ENCODE measurements at regions of chr2 and their contacts with region 1.

Region 1: GRCh38 chr2:11129598-11130449 is 25.4 kb upstream of the SLC66A3 start:
- DNase-seq: peak; percentile 53 to 90 (median 81)
- ATAC-seq: peak; percentile 90
- H3K4me3 ChIP-seq: peak overlapping the region; percentile 42 to 49
- H3K4me3 Mint-ChIP-seq: peak overlapping the region; percentile 80
- H3K27ac ChIP-seq: peak overlapping the region in 1 of 2 experiments; percentile 61
- H3K27ac Mint-ChIP-seq: peak overlapping the region; percentile 88
- H3K4me1 ChIP-seq: peaks cover 23% of the 10 kb centered on the region
- H3K4me1 Mint-ChIP-seq: peaks cover 29% of the 10 kb centered on the region
- H3K27me3 ChIP-seq: no peaks in the 10 kb centered on the region
- H3K27me3 Mint-ChIP-seq: no peaks in the 10 kb centered on the region
- CTCF ChIP-seq: peak; percentile 36

Region 2: DNA sequence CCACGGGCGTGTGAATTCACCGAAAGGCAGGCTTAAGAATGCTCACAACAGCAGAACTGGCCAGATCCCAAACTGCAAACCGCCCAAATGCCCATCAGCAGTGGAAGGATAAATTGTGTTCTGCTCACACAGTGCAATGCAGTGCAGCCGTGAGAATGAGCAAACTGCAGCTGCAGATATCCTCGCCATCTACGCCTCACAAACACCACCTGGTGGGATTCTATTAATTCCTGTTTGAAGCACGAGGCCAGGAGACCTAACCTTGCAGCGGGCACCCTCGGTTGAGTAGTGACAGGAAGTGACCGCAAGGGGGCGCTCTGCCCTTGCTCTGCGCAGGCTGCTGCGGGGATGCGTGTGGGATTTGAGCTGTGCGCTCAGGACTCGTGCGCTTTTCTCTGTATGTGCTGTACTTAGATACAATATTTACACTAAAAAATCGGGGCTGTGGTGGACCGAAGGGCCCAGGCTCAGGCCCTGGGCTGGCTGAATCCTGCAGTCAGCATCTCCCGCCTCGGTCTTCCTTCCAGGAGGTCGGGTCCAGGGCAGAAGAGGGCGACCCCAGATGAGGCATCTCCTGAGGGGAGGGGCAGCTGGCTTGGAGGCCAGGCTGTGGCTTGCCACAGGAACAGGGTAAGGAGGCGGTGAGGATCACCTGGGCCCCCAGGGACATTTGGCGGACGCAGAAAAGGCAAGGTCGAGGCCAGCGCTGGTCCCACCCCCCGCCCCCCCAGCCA is 297.5 kb before region 1 on chr2:
- CTCF ChIA-PET with region 1: interaction called, 119 read pairs
- POLR2A ChIA-PET with region 1: interaction called, 3 read pairs
- intact Hi-C with region 1: loop called (anchors 1 kb)
- DNase-seq: peak; percentile 62 to 88 (median 81)
- ATAC-seq: peak; percentile 95
- H3K4me3 ChIP-seq: no peak overlapping the region
- H3K4me3 Mint-ChIP-seq: peak overlapping the region; percentile 15
- H3K27ac ChIP-seq: no peak overlapping the region
- H3K27ac Mint-ChIP-seq: no peak overlapping the region
- H3K4me1 ChIP-seq: peaks cover 5% of the 10 kb centered on the region
- H3K4me1 Mint-ChIP-seq: peaks cover 6% of the 10 kb centered on the region
- H3K27me3 ChIP-seq: peaks cover 4% of the 10 kb centered on the region in 2 experiments
- H3K27me3 Mint-ChIP-seq: peaks cover 23% of the 10 kb centered on the region
- CTCF ChIP-seq: peak; percentile 98

Region 3: GRCh38 chr2:11196246-11196645 is 66.4 kb after region 1 on chr2:
- CTCF ChIA-PET with region 1: interaction called, 3 read pairs
- POLR2A ChIA-PET with region 1: no interaction called
- intact Hi-C with region 1: loop called (anchors 5 to 10 kb)
- DNase-seq: no peak
- ATAC-seq: no peak
- H3K4me3 ChIP-seq: no peak overlapping the region
- H3K4me3 Mint-ChIP-seq: no peak overlapping the region
- H3K27ac ChIP-seq: no peak overlapping the region
- H3K27ac Mint-ChIP-seq: no peak overlapping the region
- H3K4me1 ChIP-seq: no peaks in the 10 kb centered on the region
- H3K4me1 Mint-ChIP-seq: no peaks in the 10 kb centered on the region
- H3K27me3 ChIP-seq: no peaks in the 10 kb centered on the region
- H3K27me3 Mint-ChIP-seq: no peaks in the 10 kb centered on the region
- CTCF ChIP-seq: no peak

Region 4: GRCh38 chr2:11411768-11412448 is 282.1 kb after region 1 on chr2:
- CTCF ChIA-PET with region 1: interaction called, 25 read pairs
- POLR2A ChIA-PET with region 1: interaction called, 3 read pairs
- intact Hi-C with region 1: no loop called
- DNase-seq: peak in 2 of 9 experiments; percentile 17 to 30
- ATAC-seq: no peak
- H3K4me3 ChIP-seq: no peak overlapping the region
- H3K4me3 Mint-ChIP-seq: no peak overlapping the region
- H3K27ac ChIP-seq: no peak overlapping the region
- H3K27ac Mint-ChIP-seq: no peak overlapping the region
- H3K4me1 ChIP-seq: no peaks in the 10 kb centered on the region
- H3K4me1 Mint-ChIP-seq: no peaks in the 10 kb centered on the region
- H3K27me3 ChIP-seq: peaks cover 3 to 4% of the 10 kb centered on the region in 2 experiments
- H3K27me3 Mint-ChIP-seq: peaks cover 13% of the 10 kb centered on the region
- CTCF ChIP-seq: no peak

Region 5: DNA sequence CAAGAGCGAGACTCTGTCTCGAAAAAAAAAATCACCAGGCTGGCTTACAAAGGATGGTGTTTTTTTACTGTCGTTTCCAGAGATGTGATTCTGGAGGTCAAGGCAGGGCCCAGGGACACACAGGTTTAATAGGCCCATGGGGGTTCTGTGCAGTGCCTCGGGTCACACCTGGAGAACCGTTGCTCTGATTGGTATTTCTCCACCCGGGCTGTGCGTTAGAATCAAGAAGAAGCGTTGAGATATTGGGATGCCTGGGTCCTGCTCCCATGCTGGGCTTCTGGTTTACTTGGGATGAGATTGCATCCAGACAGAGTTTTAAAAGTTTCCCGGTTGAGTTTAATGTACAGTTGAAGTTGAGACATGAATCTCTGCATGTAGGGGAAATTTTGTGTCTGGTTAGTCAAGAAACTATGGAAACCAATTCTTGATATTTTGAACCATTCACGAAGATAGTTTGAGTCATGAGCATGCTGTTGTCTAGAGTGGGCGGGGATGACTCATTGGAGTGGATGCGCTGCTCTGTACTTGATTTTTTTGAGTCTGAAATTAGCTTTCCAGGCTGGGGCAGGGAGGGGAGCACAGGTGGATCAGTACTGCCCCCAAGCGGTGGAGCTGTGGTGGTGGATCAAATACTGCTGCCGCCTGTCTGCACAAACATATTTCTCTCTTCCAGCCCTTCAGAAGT is 454.2 kb after region 1 on chr2:
- CTCF ChIA-PET with region 1: interaction called, 78 read pairs
- POLR2A ChIA-PET with region 1: no interaction called
- intact Hi-C with region 1: loop called in 1 of 2 experiments (anchors 1 kb)
- DNase-seq: peak; percentile 16 to 65 (median 53)
- ATAC-seq: peak; percentile 94
- H3K4me3 ChIP-seq: no peak overlapping the region
- H3K4me3 Mint-ChIP-seq: no peak overlapping the region
- H3K27ac ChIP-seq: no peak overlapping the region
- H3K27ac Mint-ChIP-seq: no peak overlapping the region
- H3K4me1 ChIP-seq: no peaks in the 10 kb centered on the region
- H3K4me1 Mint-ChIP-seq: peaks cover 3% of the 10 kb centered on the region
- H3K27me3 ChIP-seq: no peaks in the 10 kb centered on the region
- H3K27me3 Mint-ChIP-seq: peaks cover 11% of the 10 kb centered on the region
- CTCF ChIP-seq: peak; percentile 53

Measured in CD8-positive, alpha-beta T cell (primary cell).